ENCODE measurements at regions of chr10 and their contacts with region 1.

Region 1: DNA sequence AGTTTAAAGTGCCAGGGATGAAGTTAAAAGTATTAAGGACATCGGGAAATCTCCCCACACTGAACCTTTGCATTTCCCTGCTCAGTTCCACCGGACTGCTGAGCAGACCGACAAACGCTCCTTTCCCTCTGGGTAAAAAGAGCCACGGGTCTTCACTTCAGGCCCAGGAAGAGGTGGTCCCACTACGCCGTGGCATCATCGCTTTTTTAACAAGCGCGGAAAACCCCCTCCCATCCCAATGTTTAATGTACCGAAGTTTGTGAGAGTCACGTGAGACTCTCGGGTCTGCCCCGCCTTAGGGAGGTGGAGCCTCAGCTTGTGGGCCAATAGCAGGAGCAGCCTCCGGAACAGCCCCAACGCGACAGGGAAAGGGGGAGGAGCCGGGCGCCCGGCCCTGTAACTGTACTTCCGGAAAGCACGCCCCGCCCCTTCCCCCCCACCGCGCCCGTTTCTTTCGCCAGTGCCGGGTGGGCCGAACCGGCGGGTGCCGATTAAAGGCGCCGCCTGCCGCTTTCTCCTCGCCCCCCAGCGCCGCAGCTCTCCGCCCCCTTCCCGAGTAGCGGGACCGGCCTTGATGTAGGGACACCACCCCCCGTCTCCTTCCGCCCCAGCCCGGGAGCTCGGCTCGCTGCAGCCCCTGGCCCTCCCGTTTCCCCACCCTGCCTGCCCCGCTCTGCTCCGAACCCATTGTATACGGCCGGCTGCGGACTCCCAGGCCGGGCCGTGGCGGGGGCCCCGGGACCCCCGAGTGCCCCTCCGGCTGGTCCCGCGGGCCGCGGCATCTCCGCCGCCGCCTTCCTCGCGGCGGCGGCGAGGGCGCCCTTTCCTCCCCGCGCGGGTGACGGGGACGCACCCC is 2.2 kb upstream of the TRIM8 start:
- DNase-seq: peak; percentile 99
- H3K4me3 Mint-ChIP-seq: peak overlapping the region; percentile 87
- H3K27ac Mint-ChIP-seq: peak overlapping the region; percentile 95
- H3K4me1 Mint-ChIP-seq: peaks cover 17% of the 10 kb centered on the region
- H3K27me3 Mint-ChIP-seq: no peaks in the 10 kb centered on the region

Region 2: GRCh38 chr10:102245101-102245931 is 396.8 kb before region 1 on chr10 and contains the start of gene GBF1:
- CTCF ChIA-PET with region 1: no interaction called
- POLR2A ChIA-PET with region 1: no interaction called
- intact Hi-C with region 1: loop called (anchors 5 kb)
- DNase-seq: peak; percentile 95
- H3K4me3 Mint-ChIP-seq: peak within 1 kb of the TSS; percentile 100
- H3K27ac Mint-ChIP-seq: peak within 1 kb of the TSS; percentile 95
- H3K4me1 Mint-ChIP-seq: peaks cover 51% of the 10 kb centered on the region
- H3K27me3 Mint-ChIP-seq: peaks cover 15% of the 10 kb centered on the region
- total RNA-seq, gene GBF1: 42.2 to 44.0 TPM

Region 3: DNA sequence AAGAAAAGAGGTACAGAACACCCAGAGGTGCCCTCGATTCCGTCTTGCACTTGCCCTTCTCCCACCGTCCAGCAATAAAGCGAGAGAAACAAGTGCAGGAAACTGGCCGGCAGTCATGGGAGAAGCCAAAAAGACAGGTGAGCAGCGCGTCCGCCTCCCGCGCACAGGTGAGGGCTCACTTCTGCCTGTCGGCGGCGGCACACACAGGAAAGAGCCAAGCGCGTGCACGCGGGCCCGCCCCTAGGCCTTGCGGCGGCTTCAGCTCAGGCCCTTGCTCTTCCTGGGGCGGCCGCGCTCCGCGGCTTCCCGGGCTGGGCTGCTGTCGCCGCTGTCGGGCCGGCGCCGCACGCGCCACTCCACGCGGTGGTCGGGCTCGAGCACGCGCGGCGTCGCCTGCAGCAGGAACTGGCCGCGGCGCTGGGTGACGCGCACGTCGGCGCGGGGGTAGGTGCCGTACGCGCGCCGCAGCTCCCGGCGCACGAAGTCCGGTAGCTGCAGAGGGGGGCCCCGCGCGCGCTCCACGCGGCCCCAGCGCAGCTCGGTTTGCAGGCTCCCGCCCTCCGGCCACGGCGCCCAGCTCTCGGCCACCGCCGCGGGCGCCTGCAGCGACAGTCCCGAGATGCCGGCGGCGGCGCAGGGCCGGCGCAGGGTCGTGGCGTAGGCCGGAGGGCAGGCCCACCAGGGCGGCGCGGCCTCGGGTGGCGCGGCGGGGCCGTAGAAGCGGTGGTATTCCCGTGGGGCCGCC is 191.7 kb before region 1 on chr10:
- CTCF ChIA-PET with region 1: no interaction called
- POLR2A ChIA-PET with region 1: interaction called, 3 read pairs
- intact Hi-C with region 1: loop called (anchors 1 kb)
- DNase-seq: peak; percentile 90
- H3K4me3 Mint-ChIP-seq: peak overlapping the region; percentile 94
- H3K27ac Mint-ChIP-seq: peak overlapping the region; percentile 94
- H3K4me1 Mint-ChIP-seq: peaks cover 35% of the 10 kb centered on the region
- H3K27me3 Mint-ChIP-seq: no peaks in the 10 kb centered on the region

Region 4: DNA sequence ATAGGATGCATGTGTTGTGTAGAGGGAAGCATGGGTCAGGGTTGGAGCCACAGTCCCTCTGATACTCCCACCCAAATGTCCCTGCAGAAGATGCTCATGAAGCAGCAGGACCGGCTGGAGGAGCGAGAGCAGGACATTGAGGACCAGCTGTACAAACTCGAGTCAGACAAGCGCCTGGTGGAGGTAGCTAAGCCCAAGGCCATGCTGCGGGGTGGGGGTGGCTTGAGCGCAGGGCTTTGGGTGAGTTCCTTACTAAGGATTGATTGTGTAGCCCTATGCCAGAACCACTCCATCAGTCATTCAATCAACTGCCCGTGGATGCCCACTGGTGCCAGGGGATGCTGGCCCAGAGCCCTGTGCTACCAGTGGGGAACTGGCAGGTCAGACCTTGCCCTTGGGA is 12.5 kb after region 1 on chr10:
- CTCF ChIA-PET with region 1: interaction called, 4 read pairs
- POLR2A ChIA-PET with region 1: interaction called, 44 read pairs
- intact Hi-C with region 1: no loop called
- DNase-seq: no peak
- H3K4me3 Mint-ChIP-seq: no peak overlapping the region
- H3K27ac Mint-ChIP-seq: peak overlapping the region; percentile 58
- H3K4me1 Mint-ChIP-seq: peaks cover 58% of the 10 kb centered on the region
- H3K27me3 Mint-ChIP-seq: no peaks in the 10 kb centered on the region

Region 5: DNA sequence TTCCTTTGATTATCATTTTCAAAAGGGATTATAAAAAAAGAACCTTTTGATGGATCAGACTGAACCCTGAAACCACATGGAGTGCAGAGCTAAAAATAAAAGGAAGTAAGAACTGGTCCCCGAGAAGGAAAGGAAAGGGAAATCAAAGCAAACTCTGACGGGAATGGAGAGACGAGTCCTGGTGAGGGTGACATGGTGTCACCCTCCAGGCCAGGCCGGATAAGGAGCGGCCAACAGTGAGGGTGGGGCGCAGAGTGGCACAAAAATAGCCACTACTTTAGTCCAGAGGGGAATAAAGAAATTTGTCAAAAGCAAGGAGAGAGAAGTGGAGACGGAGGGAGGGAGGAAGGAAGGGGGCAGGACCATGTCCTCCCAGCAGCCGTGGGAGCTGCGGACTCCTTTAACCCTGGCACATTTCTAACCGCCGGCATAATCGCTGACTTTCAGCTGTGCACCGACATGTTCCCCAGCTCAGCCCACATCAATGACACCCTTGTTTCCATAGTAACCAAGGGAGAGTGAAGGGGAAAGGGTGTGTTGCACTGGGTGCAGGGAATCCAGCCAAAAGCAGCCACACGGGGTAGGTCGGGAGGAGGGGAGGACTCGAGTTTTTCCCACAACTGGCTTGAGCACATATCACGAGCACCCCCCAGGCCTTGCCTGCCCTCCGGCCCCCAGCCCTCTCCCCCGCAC is 31.9 kb after region 1 on chr10:
- CTCF ChIA-PET with region 1: interaction called, 16 read pairs
- POLR2A ChIA-PET with region 1: interaction called, 10 read pairs
- intact Hi-C with region 1: loop called (anchors 1 kb)
- DNase-seq: peak; percentile 82
- H3K4me3 Mint-ChIP-seq: peak overlapping the region; percentile 64
- H3K27ac Mint-ChIP-seq: peak overlapping the region; percentile 34
- H3K4me1 Mint-ChIP-seq: peaks cover 33% of the 10 kb centered on the region
- H3K27me3 Mint-ChIP-seq: no peaks in the 10 kb centered on the region

Region 6: DNA sequence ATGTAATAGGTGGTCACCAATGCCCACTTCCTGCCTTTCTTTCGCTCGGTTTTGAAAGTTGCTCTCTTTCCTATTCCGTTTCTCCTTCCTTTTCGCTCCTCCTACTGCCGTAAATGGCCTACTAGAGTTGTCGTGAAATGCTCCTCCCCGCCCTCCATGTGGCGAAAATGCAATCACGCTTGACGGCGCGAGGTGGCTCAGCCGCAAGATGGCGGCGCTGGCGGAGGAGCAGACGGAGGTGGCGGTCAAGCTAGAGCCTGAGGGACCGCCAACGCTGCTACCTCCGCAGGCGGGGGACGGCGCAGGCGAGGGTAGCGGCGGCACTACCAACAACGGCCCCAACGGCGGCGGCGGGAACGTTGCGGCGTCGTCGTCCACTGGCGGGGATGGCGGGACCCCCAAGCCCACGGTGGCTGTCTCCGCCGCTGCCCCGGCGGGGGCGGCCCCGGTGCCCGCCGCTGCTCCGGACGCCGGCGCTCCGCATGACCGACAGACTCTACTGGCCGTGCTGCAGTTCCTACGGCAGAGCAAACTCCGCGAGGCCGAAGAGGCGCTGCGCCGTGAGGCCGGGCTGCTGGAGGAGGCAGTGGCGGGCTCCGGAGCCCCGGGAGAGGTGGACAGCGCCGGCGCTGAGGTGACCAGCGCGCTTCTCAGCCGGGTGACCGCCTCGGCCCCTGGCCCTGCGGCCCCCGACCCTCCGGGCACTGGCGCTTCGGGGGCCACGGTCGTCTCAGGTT is 725.8 kb after region 1 on chr10 and contains the start of gene TAF5:
- CTCF ChIA-PET with region 1: no interaction called
- POLR2A ChIA-PET with region 1: no interaction called
- intact Hi-C with region 1: loop called (anchors 5 kb)
- DNase-seq: peak; percentile 95
- H3K4me3 Mint-ChIP-seq: peak within 1 kb of the TSS; percentile 83
- H3K27ac Mint-ChIP-seq: peak within 1 kb of the TSS; percentile 86
- H3K4me1 Mint-ChIP-seq: peaks cover 11% of the 10 kb centered on the region
- H3K27me3 Mint-ChIP-seq: no peaks in the 10 kb centered on the region
- total RNA-seq, gene TAF5: 12.9 to 13.2 TPM